ENCODE measurements at regions of chr14 and their contacts with region 1.

Region 1: DNA sequence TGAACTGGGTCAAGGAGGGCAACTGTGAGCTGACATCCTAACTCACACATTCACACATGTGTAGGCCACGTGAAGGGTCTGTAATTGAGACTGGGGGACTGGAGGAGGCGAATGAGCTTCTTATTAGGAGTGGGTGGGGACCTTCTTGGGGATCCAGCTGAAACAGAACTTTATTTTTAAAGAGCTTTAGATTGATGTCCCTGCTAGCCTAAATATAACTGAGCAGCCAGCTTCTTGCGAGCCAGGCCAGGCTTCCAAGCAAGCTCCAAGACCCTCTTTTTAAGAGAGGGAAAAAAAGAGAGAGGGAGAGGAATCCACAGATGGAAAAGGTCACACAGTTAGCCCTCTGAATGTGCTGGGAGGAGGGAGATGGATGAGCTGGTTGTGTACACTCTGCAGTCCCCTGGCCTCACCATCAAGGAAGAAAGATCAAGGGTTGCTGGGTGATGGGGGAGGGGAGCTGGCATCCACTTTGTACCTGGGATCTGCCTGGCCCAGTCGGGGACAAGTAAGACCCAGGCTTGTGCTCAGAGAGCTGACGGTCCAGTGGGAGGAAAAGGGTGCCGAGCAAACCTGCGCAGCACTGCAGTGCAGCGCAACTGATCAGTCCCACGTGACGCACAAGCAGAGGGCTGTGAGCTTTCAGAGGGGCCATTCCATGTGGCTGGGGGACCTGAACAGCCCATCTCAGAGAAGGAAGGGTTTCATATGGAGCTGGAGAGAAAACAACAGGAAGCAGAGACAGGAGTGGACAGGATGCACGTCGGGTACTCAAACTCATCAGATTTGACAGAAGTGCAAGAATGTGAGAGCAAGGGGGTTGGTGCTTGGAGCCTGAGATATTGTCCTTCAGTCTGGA is 154.5 kb downstream of the ZFP36L1 start:
- DNase-seq: peak; percentile 45
- ATAC-seq: peak; percentile 82
- H3K4me3 ChIP-seq: no peak overlapping the region; a peak in 1 of 6 replicates
- H3K27ac ChIP-seq: no peak overlapping the region
- H3K4me1 ChIP-seq: peaks cover 50% of the 10 kb centered on the region
- H3K27me3 ChIP-seq: no peaks in the 10 kb centered on the region
- CTCF ChIP-seq: no peak
- EP300 ChIP-seq: peak in 1 of 2 experiments; percentile 41; a peak in 1 of 4 replicates
- POLR2A ChIP-seq: no peak
- RAD21 ChIP-seq: no peak

Region 2: DNA sequence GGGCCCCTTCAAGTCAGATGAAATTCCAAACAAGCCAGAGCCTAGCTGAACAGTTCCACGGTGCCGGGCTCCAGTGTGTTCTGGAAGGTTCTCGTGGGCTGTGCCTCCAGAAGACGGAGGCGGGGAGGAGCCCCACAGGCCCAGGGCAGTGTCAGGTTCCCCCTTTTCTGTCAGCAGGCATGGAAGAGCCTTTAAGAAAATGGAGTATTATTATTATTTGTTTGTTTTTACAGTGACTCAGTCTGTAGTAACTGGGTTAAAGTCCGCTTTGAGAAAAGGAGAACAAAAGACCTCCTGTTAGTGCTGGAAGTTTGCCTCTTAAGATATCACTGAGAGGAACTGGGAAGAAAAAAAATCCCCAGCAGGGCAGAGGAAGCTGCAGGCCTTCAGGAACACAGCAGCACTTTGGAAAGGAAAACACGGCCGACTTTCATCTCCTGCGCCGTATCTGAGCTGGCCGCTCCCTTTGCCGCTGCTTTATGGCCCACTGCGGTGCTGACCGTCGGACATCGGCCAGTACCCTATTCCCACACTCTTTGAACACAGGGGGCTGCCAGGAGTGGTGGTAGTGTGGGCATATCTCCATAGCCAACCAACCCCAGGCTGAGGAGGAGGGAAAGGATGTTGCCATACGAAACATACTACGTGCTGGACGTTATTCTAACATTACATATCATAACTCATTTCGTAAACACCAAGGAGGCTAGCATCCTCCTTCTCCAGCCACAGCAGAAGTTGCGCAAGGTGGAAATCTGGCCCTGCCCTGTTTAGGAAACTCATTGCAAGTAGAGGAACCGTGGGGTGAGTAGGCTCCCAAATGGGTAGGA is 39.5 kb before region 1 on chr14:
- CTCF ChIA-PET with region 1: no interaction called
- POLR2A ChIA-PET with region 1: interaction called, 10 read pairs
- in situ Hi-C with region 1: no loop called
- intact Hi-C with region 1: no loop called
- DNase-seq: peak; percentile 94
- ATAC-seq: peak; percentile 89
- H3K4me3 ChIP-seq: peak overlapping the region in 1 of 3 experiments; percentile 55; a peak in 3 of 6 replicates
- H3K27ac ChIP-seq: peak overlapping the region; percentile 79
- H3K4me1 ChIP-seq: peaks cover 85% of the 10 kb centered on the region
- H3K27me3 ChIP-seq: no peaks in the 10 kb centered on the region
- CTCF ChIP-seq: no peak
- EP300 ChIP-seq: peak in 1 of 2 experiments; percentile 86; a peak in 2 of 4 replicates
- POLR2A ChIP-seq: peak in 1 of 2 experiments; percentile 42; a peak in 2 of 4 replicates
- RAD21 ChIP-seq: no peak

Region 3: DNA sequence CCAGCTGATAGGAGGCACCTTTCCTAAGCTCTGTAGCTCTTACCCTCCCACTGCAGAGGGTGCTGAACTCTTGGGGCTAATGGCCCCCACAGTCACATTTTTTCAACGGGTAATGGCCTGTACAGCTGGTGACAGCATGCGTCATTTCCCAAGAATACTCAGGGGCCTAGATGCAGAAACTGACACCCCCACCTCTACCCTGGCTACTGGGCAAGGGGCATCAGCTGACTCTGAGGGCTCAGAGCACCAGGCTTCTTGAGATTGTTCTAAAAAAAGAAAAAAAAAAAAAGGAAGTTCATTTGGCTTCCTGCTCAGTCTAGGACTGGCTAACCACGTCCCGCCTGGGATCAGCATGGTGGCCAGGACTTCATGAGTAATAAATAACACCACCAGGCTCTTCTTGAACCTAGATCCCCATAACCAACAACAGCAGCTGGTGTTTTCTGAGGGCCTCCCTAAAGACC is 119.3 kb after region 1 on chr14:
- CTCF ChIA-PET with region 1: no interaction called
- POLR2A ChIA-PET with region 1: no interaction called
- in situ Hi-C with region 1: no loop called
- intact Hi-C with region 1: no loop called
- DNase-seq: peak; percentile 39
- ATAC-seq: peak; percentile 30
- H3K4me3 ChIP-seq: peak overlapping the region in 2 of 3 experiments; percentile 3 to 60; a peak in 1 of 6 replicates
- H3K27ac ChIP-seq: no peak overlapping the region
- H3K4me1 ChIP-seq: peaks cover 97% of the 10 kb centered on the region
- H3K27me3 ChIP-seq: no peaks in the 10 kb centered on the region
- CTCF ChIP-seq: no peak
- EP300 ChIP-seq: no peak
- POLR2A ChIP-seq: no peak
- RAD21 ChIP-seq: no peak

Region 4: GRCh38 chr14:69428289-69428998 is 790.1 kb after region 1 on chr14:
- CTCF ChIA-PET with region 1: no interaction called
- POLR2A ChIA-PET with region 1: no interaction called
- in situ Hi-C with region 1: no loop called
- intact Hi-C with region 1: no loop called
- DNase-seq: no peak
- ATAC-seq: no peak
- H3K4me3 ChIP-seq: no peak overlapping the region
- H3K27ac ChIP-seq: no peak overlapping the region
- H3K4me1 ChIP-seq: peaks cover 31% of the 10 kb centered on the region
- H3K27me3 ChIP-seq: no peaks in the 10 kb centered on the region
- CTCF ChIP-seq: no peak
- EP300 ChIP-seq: no peak
- POLR2A ChIP-seq: no peak
- RAD21 ChIP-seq: no peak

Measured in HepG2 (cell line).